ENCODE measurements at regions of chr1 and their contacts with region 1.

Region 1: DNA sequence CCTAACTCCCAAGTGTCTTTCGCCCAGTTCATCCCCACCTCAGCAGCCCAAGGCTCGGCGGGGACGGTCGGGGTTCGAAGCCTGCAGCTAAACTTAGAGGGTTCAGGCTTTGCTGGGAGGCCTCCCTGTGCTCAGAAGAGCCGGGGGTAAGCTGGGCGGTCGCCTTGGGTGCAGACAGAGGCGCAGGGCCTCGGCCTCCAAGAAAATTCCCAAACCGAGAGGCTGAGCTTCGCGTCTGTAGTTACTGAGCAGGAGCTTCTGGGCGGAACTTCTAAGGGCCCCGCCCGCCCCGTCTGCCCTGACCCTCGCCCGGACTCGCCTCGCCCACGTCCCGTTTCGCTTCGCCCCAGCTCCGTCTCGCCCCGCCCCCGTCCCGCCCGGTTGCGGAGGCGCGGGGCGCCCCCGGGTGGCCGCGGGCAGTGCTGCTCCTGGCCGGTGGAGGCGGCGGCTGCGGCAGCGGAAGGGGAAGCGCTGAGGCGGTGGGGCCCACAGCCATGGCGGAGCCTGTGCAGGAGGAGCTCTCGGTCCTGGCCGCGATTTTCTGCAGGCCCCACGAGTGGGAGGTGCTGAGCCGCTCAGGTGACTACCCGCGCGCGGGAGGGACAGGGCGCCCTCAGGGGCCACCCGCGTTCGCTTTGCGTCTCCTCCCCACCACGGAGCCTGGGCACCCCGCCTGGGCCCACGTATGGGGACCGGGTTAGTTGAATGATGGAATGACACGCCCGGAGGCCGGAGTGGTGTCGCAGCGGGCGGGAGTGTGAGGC is at the start of gene RWDD3:
- DNase-seq: peak; percentile 95
- ATAC-seq: peak; percentile 96
- H3K4me3 ChIP-seq: peak within 1 kb of the TSS; percentile 55 to 86 (median 78)
- H3K4me3 Mint-ChIP-seq: peak within 1 kb of the TSS; percentile 87
- H3K27ac ChIP-seq: peak within 1 kb of the TSS; percentile 63 to 73
- H3K27ac Mint-ChIP-seq: peak within 1 kb of the TSS; percentile 89
- H3K4me1 ChIP-seq: peaks cover 10 to 11% of the 10 kb centered on the region in 2 donors
- H3K4me1 Mint-ChIP-seq: peaks cover 35% of the 10 kb centered on the region
- H3K27me3 ChIP-seq: peaks cover 0 to 10% (median 4%) of the 10 kb centered on the region in 4 experiments
- H3K27me3 Mint-ChIP-seq: peaks cover 10% of the 10 kb centered on the region
- CTCF ChIP-seq: peak; percentile 82
- total RNA-seq, gene RWDD3: 21.9 and 28.1 TPM in 2 replicates

Region 2: DNA sequence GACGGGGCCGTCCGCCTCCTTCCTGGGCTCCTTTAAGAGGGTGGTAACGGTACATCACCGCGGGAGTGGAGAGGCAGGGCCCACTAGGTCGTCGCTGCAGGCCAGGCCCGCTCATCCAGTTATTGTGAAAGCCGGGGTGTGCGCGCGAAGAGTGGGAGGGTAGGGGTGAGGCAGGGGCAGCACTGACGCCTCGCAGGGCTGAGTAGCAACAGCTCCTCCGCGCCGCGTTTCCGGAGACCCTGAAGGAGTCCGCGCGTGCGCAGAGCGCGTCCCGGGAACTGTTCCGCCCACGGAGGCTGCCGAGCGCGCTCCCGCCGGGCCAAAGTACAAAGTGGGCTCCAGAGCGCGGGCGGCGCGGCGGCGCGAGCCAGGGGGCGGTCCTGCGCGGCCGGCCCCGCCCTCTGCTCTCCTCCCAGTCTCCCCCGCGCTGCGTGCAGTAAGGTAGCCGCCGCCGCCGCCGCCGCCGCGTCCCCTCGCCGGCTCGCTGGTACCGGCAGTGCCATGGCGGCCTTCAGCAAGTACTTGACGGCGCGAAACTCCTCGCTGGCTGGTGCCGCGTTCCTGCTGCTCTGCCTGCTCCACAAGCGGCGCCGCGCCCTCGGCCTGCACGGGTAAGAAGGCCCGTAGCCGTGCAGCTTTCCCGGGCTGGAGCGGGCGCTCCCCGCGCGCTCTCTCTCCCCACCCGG is 815.8 kb before region 1 on chr1 and contains the start of gene ABCD3:
- CTCF ChIA-PET with region 1: no interaction called
- POLR2A ChIA-PET with region 1: interaction called, 3 read pairs
- intact Hi-C with region 1: loop called (anchors 5 kb)
- DNase-seq: peak; percentile 98
- ATAC-seq: peak; percentile 95
- H3K4me3 ChIP-seq: peak within 1 kb of the TSS; percentile 67 to 89 (median 85)
- H3K4me3 Mint-ChIP-seq: no peak within 1 kb of the TSS
- H3K27ac ChIP-seq: peak within 1 kb of the TSS; percentile 73 to 80
- H3K27ac Mint-ChIP-seq: peak within 1 kb of the TSS; percentile 77
- H3K4me1 ChIP-seq: peaks cover 12 to 15% of the 10 kb centered on the region in 2 donors
- H3K4me1 Mint-ChIP-seq: peaks cover 22% of the 10 kb centered on the region
- H3K27me3 ChIP-seq: peaks cover 0 to 5% (median 2%) of the 10 kb centered on the region in 4 experiments
- H3K27me3 Mint-ChIP-seq: peaks cover 7% of the 10 kb centered on the region
- CTCF ChIP-seq: no peak
- total RNA-seq, gene ABCD3: 19.4 and 21.0 TPM in 2 replicates

Region 3: DNA sequence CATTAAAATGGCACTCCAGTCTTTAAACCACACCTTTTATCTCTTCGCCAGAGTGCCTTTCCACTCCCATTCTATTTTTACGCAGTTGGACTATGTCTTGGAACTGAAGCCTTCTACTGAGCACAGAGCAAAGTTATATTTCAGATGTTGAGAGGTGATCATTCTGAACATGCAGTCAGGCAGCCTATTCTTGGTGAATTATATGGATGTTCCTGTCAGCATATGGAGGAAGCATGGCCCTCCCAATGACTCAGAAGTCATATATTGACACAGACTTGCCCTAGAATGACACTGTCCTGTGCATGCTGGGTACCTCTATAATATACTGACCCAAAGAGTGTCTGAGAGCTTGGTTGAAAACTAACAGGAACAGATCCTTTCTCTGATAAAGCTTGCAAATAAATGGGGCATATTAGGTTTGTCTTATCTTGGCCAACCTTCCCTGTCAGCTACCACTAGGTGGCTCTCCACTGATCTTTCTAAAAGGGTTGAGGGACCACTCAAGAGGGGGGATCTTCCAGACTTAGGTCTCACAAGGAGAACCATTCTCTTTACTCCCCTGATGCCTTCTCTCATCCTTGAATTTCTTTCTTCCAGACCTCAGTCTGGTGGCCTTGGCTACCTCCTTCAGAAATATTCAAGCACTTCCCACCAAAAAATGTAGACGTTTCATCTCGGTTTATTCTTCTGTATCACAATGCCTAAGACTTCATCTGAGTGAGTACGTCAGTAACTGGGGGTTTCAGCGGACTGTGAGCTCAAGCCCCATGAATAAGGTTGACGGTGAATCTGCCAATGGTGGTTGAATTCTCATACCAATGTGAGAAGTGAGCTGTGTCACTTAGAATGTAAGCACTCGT is 149.4 kb before region 1 on chr1:
- CTCF ChIA-PET with region 1: interaction called, 92 read pairs
- POLR2A ChIA-PET with region 1: interaction called, 6 read pairs
- intact Hi-C with region 1: loop called (anchors 1 kb)
- DNase-seq: peak; percentile 67
- ATAC-seq: peak; percentile 78
- H3K4me3 ChIP-seq: no peak overlapping the region
- H3K4me3 Mint-ChIP-seq: no peak overlapping the region
- H3K27ac ChIP-seq: no peak overlapping the region
- H3K27ac Mint-ChIP-seq: no peak overlapping the region
- H3K4me1 ChIP-seq: no peaks in the 10 kb centered on the region
- H3K4me1 Mint-ChIP-seq: no peaks in the 10 kb centered on the region
- H3K27me3 ChIP-seq: peaks cover 0 to 4% (median 0%) of the 10 kb centered on the region in 4 experiments
- H3K27me3 Mint-ChIP-seq: peaks cover 10% of the 10 kb centered on the region
- CTCF ChIP-seq: peak; percentile 81

Region 4: DNA sequence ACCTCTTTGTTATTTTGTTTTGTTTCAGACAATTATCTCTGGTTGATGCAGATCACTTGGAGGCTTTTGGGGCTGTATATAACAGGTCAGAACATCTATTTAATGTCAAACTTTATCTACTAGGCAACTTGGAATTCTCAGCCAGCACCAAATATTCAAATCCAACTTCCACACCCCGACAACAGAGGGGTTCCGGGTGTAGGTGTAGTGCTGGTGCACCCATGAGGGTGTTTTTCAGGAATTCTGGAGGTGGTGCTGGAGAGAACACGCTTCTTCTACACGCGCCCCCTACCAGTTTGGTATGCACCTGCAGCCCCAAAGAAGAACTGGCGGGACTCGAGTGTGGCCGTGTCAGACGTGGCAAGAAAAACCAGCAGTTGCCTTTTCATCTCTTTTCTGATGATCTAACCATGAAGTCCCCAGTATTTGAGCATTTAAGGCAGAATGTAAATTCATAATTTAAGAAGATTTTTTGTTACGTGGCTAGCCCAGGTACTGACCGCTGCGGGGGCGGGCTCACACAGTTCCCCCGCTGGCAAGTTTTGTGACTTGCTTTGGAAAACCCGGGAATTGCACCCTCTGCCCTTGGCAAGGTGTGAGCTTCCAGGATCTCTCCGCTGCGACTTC is 117.2 kb before region 1 on chr1:
- CTCF ChIA-PET with region 1: interaction called, 36 read pairs
- POLR2A ChIA-PET with region 1: interaction called, 12 read pairs
- intact Hi-C with region 1: loop called (anchors 1 kb)
- DNase-seq: peak; percentile 74
- ATAC-seq: peak; percentile 83
- H3K4me3 ChIP-seq: peak overlapping the region; percentile 19 to 88 (median 74)
- H3K4me3 Mint-ChIP-seq: peak overlapping the region; percentile 97
- H3K27ac ChIP-seq: peak overlapping the region in 1 of 2 donors; percentile 35
- H3K27ac Mint-ChIP-seq: peak overlapping the region; percentile 90
- H3K4me1 ChIP-seq: peaks cover 5 to 10% of the 10 kb centered on the region in 2 donors
- H3K4me1 Mint-ChIP-seq: peaks cover 11% of the 10 kb centered on the region
- H3K27me3 ChIP-seq: peaks cover 0 to 29% (median 17%) of the 10 kb centered on the region in 4 experiments
- H3K27me3 Mint-ChIP-seq: peaks cover 49% of the 10 kb centered on the region
- CTCF ChIP-seq: peak; percentile 74

Region 5: GRCh38 chr1:95139039-95139438 is 94.9 kb before region 1 on chr1:
- CTCF ChIA-PET with region 1: interaction called, 10 read pairs
- POLR2A ChIA-PET with region 1: no interaction called
- intact Hi-C with region 1: no loop called
- DNase-seq: no peak
- ATAC-seq: no peak
- H3K4me3 ChIP-seq: no peak overlapping the region
- H3K4me3 Mint-ChIP-seq: no peak overlapping the region
- H3K27ac ChIP-seq: no peak overlapping the region
- H3K27ac Mint-ChIP-seq: no peak overlapping the region
- H3K4me1 ChIP-seq: no peaks in the 10 kb centered on the region
- H3K4me1 Mint-ChIP-seq: no peaks in the 10 kb centered on the region
- H3K27me3 ChIP-seq: no peaks in the 10 kb centered on the region
- H3K27me3 Mint-ChIP-seq: no peaks in the 10 kb centered on the region
- CTCF ChIP-seq: no peak

Region 6: GRCh38 chr1:95246511-95246910 is 12.6 kb after region 1 on chr1:
- CTCF ChIA-PET with region 1: interaction called, 21 read pairs
- POLR2A ChIA-PET with region 1: no interaction called
- intact Hi-C with region 1: no loop called
- DNase-seq: no peak
- ATAC-seq: no peak
- H3K4me3 ChIP-seq: no peak overlapping the region
- H3K4me3 Mint-ChIP-seq: no peak overlapping the region
- H3K27ac ChIP-seq: no peak overlapping the region
- H3K27ac Mint-ChIP-seq: no peak overlapping the region
- H3K4me1 ChIP-seq: no peaks in the 10 kb centered on the region
- H3K4me1 Mint-ChIP-seq: peaks cover 10% of the 10 kb centered on the region
- H3K27me3 ChIP-seq: no peaks in the 10 kb centered on the region
- H3K27me3 Mint-ChIP-seq: no peaks in the 10 kb centered on the region
- CTCF ChIP-seq: no peak

Region 7: DNA sequence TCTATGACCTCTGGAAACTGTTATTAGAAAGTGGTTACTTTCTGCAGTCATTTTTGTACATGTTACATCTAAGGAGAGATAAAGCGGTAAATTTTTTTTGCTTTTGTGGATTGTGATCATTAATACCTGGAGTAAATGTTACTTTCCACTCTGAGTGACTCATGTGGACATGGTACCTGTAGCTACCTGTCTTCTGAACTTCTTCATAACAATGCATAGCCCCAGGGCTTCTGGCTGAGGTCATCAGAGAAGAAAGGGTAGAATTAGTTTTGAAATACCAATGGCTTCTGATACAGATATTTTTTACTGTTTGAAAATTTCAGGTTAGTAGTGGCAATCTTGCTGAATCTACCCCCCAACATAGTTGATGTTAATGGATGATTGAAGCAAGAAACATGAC is 489.4 kb after region 1 on chr1:
- CTCF ChIA-PET with region 1: no interaction called
- POLR2A ChIA-PET with region 1: no interaction called
- intact Hi-C with region 1: no loop called
- DNase-seq: no peak
- ATAC-seq: no peak
- H3K4me3 ChIP-seq: no peak overlapping the region
- H3K4me3 Mint-ChIP-seq: no peak overlapping the region
- H3K27ac ChIP-seq: no peak overlapping the region
- H3K27ac Mint-ChIP-seq: no peak overlapping the region
- H3K4me1 ChIP-seq: no peaks in the 10 kb centered on the region
- H3K4me1 Mint-ChIP-seq: no peaks in the 10 kb centered on the region
- H3K27me3 ChIP-seq: no peaks in the 10 kb centered on the region
- H3K27me3 Mint-ChIP-seq: no peaks in the 10 kb centered on the region
- CTCF ChIP-seq: no peak

Region 8: DNA sequence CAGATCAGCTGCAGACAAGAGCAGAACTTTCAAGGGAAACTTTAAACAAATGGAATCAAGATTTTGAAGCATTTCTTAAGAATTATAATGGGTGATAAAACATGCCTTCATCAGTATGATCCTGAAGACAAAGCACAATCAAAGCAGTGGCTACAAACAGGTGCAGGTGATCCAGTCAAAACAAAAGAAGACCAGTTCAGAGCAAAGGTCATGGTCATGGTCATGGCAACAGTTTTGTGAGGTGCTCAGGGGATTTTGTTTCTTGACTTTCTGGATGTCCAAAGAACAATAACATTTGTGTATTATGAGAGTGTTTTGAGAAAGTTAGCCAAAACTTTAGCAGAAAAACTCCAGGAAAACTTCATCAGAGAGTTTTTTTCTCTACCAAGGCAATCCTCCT is 806.0 kb after region 1 on chr1:
- CTCF ChIA-PET with region 1: no interaction called
- POLR2A ChIA-PET with region 1: no interaction called
- intact Hi-C with region 1: no loop called
- DNase-seq: no peak
- ATAC-seq: no peak
- H3K4me3 ChIP-seq: no peak overlapping the region
- H3K4me3 Mint-ChIP-seq: no peak overlapping the region
- H3K27ac ChIP-seq: no peak overlapping the region
- H3K27ac Mint-ChIP-seq: no peak overlapping the region
- H3K4me1 ChIP-seq: no peaks in the 10 kb centered on the region
- H3K4me1 Mint-ChIP-seq: no peaks in the 10 kb centered on the region
- H3K27me3 ChIP-seq: no peaks in the 10 kb centered on the region
- H3K27me3 Mint-ChIP-seq: no peaks in the 10 kb centered on the region
- CTCF ChIP-seq: no peak

Measured in B cell (primary cell).